Activated CD4-positive, alpha-beta memory T cell treated with anti-CD3 and anti-CD28 coated beads, Interleukin-2, amount 10 ng/mL, durations not matched to agents 7 days and 5 days (primary cell): ENCODE measurements at regions of chr20 and their contacts with region 1.

Region 1: GRCh38 chr20:59120491-59120890 is 43.1 kb upstream of the ZNF831 start:
- DNase-seq: peak; percentile 37
- H3K4me3 Mint-ChIP-seq: no peak overlapping the region
- H3K27ac Mint-ChIP-seq: no peak overlapping the region
- H3K4me1 Mint-ChIP-seq: peaks cover 52% of the 10 kb centered on the region
- H3K27me3 Mint-ChIP-seq: peaks cover 15% of the 10 kb centered on the region

Region 2: DNA sequence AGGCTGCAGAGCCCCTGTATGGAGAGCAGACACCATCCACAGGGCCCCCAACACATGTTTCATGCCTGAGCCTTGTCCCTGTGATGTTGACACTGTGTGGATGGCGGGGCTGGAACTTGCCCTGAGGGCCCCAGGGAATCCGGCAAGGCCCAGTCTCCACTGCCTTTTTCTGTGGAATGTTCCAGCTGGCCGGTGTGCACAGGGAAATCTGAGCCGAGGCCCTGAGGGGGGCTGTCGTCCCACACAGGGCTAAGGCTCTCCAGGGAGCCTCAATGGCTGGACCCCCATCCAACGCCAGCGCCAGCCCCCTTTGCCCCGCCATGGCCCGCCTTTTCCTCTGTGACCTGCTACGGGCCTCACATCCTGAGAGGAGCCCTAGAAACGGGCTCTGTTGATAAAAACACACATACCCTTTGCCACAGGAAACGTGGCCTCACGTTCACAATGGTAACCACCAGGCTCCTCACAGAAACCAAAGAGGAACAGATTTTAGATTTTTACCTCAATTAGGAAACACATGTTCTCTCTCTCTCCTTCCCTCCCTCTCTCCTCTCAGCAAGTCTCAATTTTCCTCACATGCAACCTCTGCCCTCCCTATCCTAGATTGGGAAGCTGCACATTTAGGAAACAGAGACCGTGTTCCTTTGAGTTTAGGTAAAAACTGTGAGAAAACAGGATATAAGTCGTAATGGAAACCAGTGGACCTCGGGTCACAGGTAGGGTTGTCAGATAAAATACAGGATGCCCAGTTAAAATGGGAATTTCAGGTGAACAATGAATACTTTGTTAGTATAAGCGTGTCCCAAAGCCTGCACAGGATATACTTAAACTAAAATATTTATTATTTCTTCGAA is 29.4 kb after region 1 on chr20:
- CTCF ChIA-PET with region 1: interaction called, 3 read pairs
- POLR2A ChIA-PET with region 1: interaction called, 20 read pairs
- DNase-seq: peak; percentile 85
- H3K4me3 Mint-ChIP-seq: peak overlapping the region; percentile 9
- H3K27ac Mint-ChIP-seq: peak overlapping the region; percentile 94
- H3K4me1 Mint-ChIP-seq: peaks cover 88% of the 10 kb centered on the region
- H3K27me3 Mint-ChIP-seq: peaks cover 4% of the 10 kb centered on the region

Region 3: GRCh38 chr20:59159493-59160376 is 39.2 kb after region 1 on chr20:
- CTCF ChIA-PET with region 1: interaction called, 5 read pairs
- POLR2A ChIA-PET with region 1: interaction called, 26 read pairs
- DNase-seq: peak; percentile 70
- H3K4me3 Mint-ChIP-seq: peak overlapping the region; percentile 76
- H3K27ac Mint-ChIP-seq: peak overlapping the region; percentile 99
- H3K4me1 Mint-ChIP-seq: peaks cover 68% of the 10 kb centered on the region
- H3K27me3 Mint-ChIP-seq: peaks cover 1% of the 10 kb centered on the region

Region 4: DNA sequence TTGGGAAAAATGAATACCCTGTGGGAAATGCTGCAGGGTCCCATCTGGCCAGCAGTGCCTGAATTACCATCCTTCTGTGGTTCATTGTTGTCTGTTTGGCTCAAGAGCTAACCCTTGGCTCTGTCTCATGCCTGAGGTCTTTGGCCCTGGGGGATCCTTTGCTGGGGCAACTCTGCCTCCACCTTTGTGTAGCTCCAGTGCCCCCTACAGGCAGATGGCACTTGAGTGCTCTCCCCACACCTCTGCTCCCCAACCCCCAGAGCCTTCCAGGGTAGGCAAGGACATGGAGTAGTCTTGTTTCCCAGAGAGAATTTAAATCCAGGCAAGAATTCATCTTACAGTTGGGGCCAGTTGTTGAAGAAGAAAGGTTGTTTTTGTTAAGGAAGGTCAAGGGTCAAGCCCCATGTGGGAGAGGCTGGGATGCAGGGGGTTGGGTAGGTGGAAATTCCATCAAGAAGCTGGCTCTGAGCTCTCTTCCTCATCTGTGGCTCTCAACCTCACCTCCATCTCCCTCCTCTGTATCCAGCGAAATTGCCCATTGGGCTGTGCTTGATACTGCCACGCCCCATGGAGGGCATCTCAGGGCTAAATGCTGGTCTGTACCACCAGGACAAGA is 87.4 kb after region 1 on chr20:
- CTCF ChIA-PET with region 1: interaction called, 14 read pairs
- POLR2A ChIA-PET with region 1: interaction called, 3 read pairs
- DNase-seq: peak; percentile 80
- H3K4me3 Mint-ChIP-seq: no peak overlapping the region
- H3K27ac Mint-ChIP-seq: no peak overlapping the region
- H3K4me1 Mint-ChIP-seq: peaks cover 2% of the 10 kb centered on the region
- H3K27me3 Mint-ChIP-seq: no peaks in the 10 kb centered on the region

Region 5: DNA sequence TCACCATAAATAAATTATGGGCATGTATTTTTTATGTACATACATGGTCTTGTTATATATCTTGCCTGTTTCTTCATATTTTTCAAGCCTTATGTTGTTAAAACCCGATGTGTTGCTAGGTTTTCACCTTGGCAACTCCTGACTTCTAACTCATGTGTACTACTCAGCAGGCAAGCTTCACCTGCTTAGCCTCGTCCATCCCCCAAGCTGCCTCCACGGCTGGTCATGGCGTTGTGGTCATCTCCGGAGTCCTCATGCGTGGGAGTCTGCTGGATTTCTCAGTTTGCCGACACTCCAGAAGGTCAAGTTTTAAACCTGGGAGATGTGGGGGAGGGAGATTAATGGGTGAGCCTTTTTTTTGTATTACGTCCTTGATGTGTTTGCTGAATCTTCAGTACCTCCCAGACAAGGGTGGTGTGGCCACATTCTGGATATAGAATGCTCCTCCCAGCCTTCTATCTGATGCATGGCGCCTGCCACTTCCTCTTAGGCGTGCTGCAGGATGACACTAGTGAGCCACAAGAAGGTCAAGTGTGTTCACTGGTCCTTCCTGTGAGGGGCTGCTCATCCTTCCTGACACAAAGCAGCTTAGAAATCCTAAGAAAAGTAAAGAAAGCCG is 153.4 kb after region 1 on chr20:
- CTCF ChIA-PET with region 1: no interaction called
- POLR2A ChIA-PET with region 1: no interaction called
- DNase-seq: peak; percentile 27
- H3K4me3 Mint-ChIP-seq: no peak overlapping the region
- H3K27ac Mint-ChIP-seq: peak overlapping the region; percentile 58
- H3K4me1 Mint-ChIP-seq: peaks cover 31% of the 10 kb centered on the region
- H3K27me3 Mint-ChIP-seq: peaks cover 16% of the 10 kb centered on the region